ENCODE measurements at regions of chr12 and their contacts with region 1.

Region 1: DNA sequence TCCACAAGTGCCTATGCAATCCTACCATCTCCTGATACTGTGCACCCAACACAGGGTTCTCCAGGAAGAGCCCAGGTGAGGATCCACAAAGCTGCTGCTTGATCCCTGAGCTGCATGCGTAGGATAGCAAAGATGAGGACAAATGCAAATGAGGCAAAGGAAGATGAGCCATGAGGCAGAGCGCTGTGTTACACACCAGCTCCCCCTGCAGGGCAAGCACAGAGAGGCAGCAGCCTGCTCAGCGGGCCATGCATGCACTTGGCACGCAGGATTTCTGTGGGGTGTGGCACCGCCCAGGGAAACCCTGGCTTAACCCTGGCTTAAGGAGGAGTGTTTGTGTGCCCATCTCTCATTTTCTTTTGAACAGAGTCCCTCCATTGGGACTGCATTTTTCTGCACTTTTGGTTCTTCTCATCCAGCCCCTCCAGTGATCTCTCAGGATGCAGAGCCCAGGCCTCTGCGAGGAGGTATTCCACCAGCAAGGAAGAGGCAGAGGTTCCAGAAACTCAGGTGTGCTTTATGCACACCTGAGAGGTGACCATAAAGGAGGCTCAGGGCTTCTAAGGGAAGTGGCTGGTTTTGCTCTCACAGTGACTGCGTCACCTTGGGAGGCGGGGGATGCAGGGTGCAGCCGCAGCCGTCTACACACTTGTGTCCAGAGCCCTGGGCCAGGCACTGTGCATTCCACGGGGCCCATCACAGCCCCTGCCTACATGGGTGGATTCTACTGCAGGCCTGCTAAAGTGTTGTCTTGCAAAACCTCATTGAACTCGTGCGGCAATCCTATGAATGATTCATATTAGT is 973.3 kb upstream of the TMEM132C start:
- DNase-seq: peak; percentile 50
- ATAC-seq: peak; percentile 98
- H3K4me3 ChIP-seq: no peak overlapping the region
- H3K27ac ChIP-seq: no peak overlapping the region
- H3K4me1 ChIP-seq: no peaks in the 10 kb centered on the region
- H3K27me3 ChIP-seq: no peaks in the 10 kb centered on the region
- CTCF ChIP-seq: peak; percentile 81 to 95 (median 95)
- POLR2A ChIP-seq: no peak
- RAD21 ChIP-seq: peak; percentile 92

Region 2: DNA sequence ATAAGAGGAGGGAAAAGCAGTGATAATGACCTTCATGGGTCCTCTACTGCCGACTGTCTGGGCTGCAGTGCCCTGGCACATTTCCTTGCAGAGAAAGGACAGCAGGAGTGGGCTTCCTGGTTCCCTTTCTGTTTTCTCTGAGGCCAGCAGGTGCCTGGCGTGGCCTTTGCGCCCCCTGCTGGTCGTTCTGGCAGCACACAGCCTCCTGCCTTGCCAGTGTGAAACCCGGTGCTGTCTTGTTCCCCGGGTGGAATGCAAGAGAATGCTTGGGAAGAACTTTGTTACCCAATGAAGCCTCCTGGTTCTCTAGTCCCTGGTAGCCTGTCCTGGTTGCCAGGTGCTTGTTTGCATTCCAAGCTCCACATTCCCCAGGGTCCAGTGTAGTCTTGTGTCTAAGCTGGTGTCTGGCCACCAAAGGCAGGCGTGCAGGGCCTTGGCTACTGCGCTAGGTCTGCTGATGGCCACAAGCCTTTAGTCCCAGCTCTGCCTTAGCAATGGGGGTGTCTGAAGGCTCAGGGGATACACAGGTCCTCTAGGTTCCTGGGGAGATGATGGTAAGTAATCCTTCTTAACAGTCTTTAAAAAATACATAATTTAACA is 419.2 kb before region 1 on chr12:
- CTCF ChIA-PET with region 1: no interaction called
- POLR2A ChIA-PET with region 1: no interaction called
- RAD21 ChIA-PET with region 1: no interaction called
- intact Hi-C with region 1: loop called (anchors 5 kb)
- DNase-seq: peak; percentile 50
- ATAC-seq: peak; percentile 99
- H3K4me3 ChIP-seq: no peak overlapping the region
- H3K27ac ChIP-seq: no peak overlapping the region
- H3K4me1 ChIP-seq: no peaks in the 10 kb centered on the region
- H3K27me3 ChIP-seq: 0 out of 2 replicates have a peak, but pooled peaks cover under 1% of the 10 kb centered on the region
- CTCF ChIP-seq: peak; percentile 69 to 99 (median 93); a peak in 5 of 6 replicates
- POLR2A ChIP-seq: no peak
- RAD21 ChIP-seq: peak; percentile 86

Region 3: GRCh38 chr12:126926023-126926594 is 367.6 kb before region 1 on chr12:
- CTCF ChIA-PET with region 1: interaction called, 4 read pairs
- POLR2A ChIA-PET with region 1: no interaction called
- RAD21 ChIA-PET with region 1: no interaction called
- intact Hi-C with region 1: loop called (anchors 2 kb)
- DNase-seq: no peak
- ATAC-seq: 0 out of 2 replicates have a peak, but pooled peaks have one; percentile 63
- H3K4me3 ChIP-seq: no peak overlapping the region
- H3K27ac ChIP-seq: no peak overlapping the region
- H3K4me1 ChIP-seq: no peaks in the 10 kb centered on the region
- H3K27me3 ChIP-seq: no peaks in the 10 kb centered on the region
- CTCF ChIP-seq: peak in 1 of 3 experiments; percentile 14; a peak in 2 of 6 replicates
- POLR2A ChIP-seq: no peak
- RAD21 ChIP-seq: peak; percentile 52

Region 4: DNA sequence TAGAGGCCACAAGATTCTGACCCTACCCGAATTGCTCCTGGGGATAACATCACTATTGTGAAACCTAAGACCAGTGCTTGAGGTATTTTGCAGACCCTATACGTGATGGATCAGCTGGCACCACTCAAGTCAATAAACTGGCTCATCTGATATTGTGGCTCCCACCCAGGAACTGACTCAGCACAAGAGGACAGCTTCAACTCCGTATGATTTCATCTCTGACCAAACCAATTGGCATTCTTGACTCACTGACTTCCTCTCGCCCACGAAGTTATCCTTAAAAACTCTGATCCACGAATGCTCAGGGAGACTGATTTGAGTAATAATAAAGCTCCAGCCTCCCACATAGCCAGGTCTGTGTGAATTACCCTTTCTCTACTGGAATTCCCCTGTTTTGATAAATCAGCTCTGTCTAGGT is 62.9 kb before region 1 on chr12:
- CTCF ChIA-PET with region 1: no interaction called
- POLR2A ChIA-PET with region 1: no interaction called
- RAD21 ChIA-PET with region 1: no interaction called
- intact Hi-C with region 1: no loop called
- DNase-seq: peak; percentile 48
- ATAC-seq: peak; percentile 52
- H3K4me3 ChIP-seq: no peak overlapping the region
- H3K27ac ChIP-seq: no peak overlapping the region
- H3K4me1 ChIP-seq: peaks cover 0 to 15% of the 10 kb centered on the region in 2 experiments; a peak in 2 of 4 replicates
- H3K27me3 ChIP-seq: no peaks in the 10 kb centered on the region
- CTCF ChIP-seq: no peak
- POLR2A ChIP-seq: no peak
- RAD21 ChIP-seq: no peak

Region 5: GRCh38 chr12:127280393-127281275 is 13.1 kb before region 1 on chr12:
- CTCF ChIA-PET with region 1: interaction called, 27 read pairs
- POLR2A ChIA-PET with region 1: no interaction called
- RAD21 ChIA-PET with region 1: no interaction called
- intact Hi-C with region 1: no loop called
- DNase-seq: peak; percentile 62
- ATAC-seq: peak; percentile 99
- H3K4me3 ChIP-seq: no peak overlapping the region
- H3K27ac ChIP-seq: no peak overlapping the region
- H3K4me1 ChIP-seq: no peaks in the 10 kb centered on the region; a peak in 1 of 4 replicates
- H3K27me3 ChIP-seq: 0 out of 2 replicates have a peak, but pooled peaks cover 4% of the 10 kb centered on the region
- CTCF ChIP-seq: peak; percentile 100
- POLR2A ChIP-seq: no peak
- RAD21 ChIP-seq: peak; percentile 77

Region 6: GRCh38 chr12:127381048-127381668 is 87.4 kb after region 1 on chr12:
- CTCF ChIA-PET with region 1: interaction called, 5 read pairs
- POLR2A ChIA-PET with region 1: no interaction called
- RAD21 ChIA-PET with region 1: no interaction called
- intact Hi-C with region 1: loop called (anchors 1 kb)
- DNase-seq: peak; percentile 21
- ATAC-seq: peak; percentile 99
- H3K4me3 ChIP-seq: no peak overlapping the region
- H3K27ac ChIP-seq: no peak overlapping the region
- H3K4me1 ChIP-seq: no peaks in the 10 kb centered on the region
- H3K27me3 ChIP-seq: no peaks in the 10 kb centered on the region
- CTCF ChIP-seq: peak; percentile 74 to 93 (median 92)
- POLR2A ChIP-seq: no peak
- RAD21 ChIP-seq: peak; percentile 89

Measured in HCT116 (cell line).